ENCODE measurements at regions of chr4 and their contacts with region 1.

Region 1: GRCh38 chr4:187606581-187606980 is 389.0 kb upstream of the ZFP42 start:
- DNase-seq: peak in 37 of 42 donors; percentile 20 to 81 (median 48)

Region 2: GRCh38 chr4:189124149-189124758 is 1517.7 kb after region 1 on chr4:
- intact Hi-C with region 1: loop called (anchors 10 kb)
- DNase-seq: peak; percentile 25 to 78 (median 62)

Measured in head of caudate nucleus (tissue), 42 donors.